Endothelial cell of umbilical vein (primary cell): ENCODE measurements at regions of chr13 and their contacts with region 1.

Region 1: DNA sequence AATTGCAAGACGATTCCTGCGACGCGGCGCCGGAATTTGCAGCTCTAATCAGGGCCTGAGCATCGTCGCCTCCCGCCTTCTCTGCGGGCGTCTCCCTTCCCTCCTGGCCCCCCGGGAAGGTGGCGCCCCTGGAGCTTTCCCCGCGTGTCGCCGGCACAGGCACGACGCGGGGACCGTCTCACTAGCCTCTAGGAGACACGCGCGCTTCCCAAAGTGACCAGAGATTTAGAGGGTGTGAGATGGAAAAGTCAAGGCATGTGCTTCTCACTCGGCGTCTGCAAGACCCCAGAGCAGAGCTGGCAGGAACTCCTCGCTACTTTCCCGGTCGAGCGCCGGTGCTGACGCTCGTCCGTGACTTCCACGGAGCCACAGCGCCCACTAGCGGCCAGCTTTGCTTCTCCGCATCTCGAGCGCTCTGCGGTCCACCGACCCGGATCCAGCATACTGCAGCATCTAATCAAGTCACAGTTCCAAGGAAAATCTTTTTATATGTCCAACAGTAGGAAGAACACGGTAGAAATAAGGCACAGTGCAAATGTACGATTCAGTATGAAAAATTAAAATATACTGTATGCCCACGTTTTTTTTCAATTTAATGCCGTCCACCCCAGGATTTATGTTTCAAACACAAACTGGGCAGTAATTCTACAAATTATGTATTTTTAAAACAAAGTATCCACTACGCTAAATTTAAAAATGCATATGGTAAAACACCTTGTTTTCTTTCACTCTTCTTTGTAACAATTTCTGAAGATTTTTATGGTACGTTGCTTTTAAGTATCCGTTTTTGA is 977 bp upstream of the EFNB2 start:
- DNase-seq: peak; percentile 94
- H3K4me3 ChIP-seq: peak overlapping the region; percentile 16 to 54 (median 53)
- H3K27ac ChIP-seq: peak overlapping the region; percentile 35
- H3K4me1 ChIP-seq: peaks cover 37% of the 10 kb centered on the region
- H3K27me3 ChIP-seq: no peaks in the 10 kb centered on the region
- CTCF ChIP-seq: peak; percentile 95 to 96
- POLR2A ChIP-seq: no peak

Region 2: DNA sequence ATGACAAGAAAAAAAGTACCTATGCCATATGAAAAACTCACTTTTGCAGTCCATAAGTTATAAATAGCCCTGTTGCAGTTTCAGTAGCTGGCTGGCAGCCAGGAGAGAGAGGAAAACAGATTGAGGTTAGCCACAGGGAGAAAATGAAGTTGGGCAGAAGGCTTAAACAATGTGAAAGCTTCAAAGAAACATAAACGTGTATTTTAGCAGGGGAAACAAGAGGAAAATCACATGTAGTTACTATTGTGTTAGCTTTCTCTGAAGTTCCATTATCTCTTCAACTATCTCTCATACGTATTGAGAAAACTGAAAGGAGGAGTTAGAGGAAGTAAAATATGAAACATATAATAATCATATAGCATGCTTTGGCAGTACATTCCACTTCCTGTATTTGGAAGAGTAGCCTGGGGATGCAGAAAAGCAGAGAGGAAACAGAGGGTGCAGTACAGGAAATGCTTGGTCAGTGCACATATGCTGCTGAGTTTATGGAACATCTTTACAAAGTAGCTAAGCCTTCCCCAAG is 1552.1 kb before region 1 on chr13:
- CTCF ChIA-PET with region 1: no interaction called
- POLR2A ChIA-PET with region 1: no interaction called
- dilution Hi-C with region 1: no loop called
- intact Hi-C with region 1: loop called (anchors 10 kb)
- DNase-seq: peak; percentile 92
- H3K4me3 ChIP-seq: peak overlapping the region in 1 of 3 experiments; percentile 25
- H3K27ac ChIP-seq: peak overlapping the region; percentile 78
- H3K4me1 ChIP-seq: peaks cover 26% of the 10 kb centered on the region
- H3K27me3 ChIP-seq: no peaks in the 10 kb centered on the region
- CTCF ChIP-seq: no peak
- POLR2A ChIP-seq: no peak

Region 3: GRCh38 chr13:105436943-105437342 is 1099.5 kb before region 1 on chr13:
- CTCF ChIA-PET with region 1: interaction called, 7 read pairs
- POLR2A ChIA-PET with region 1: no interaction called
- dilution Hi-C with region 1: no loop called
- intact Hi-C with region 1: loop called (anchors 1 kb)
- DNase-seq: peak; percentile 92
- H3K4me3 ChIP-seq: no peak overlapping the region
- H3K27ac ChIP-seq: peak overlapping the region; percentile 74
- H3K4me1 ChIP-seq: peaks cover 33% of the 10 kb centered on the region
- H3K27me3 ChIP-seq: no peaks in the 10 kb centered on the region
- CTCF ChIP-seq: no peak
- POLR2A ChIP-seq: no peak

Region 4: GRCh38 chr13:105847527-105848291 is 688.7 kb before region 1 on chr13:
- CTCF ChIA-PET with region 1: no interaction called
- POLR2A ChIA-PET with region 1: no interaction called
- dilution Hi-C with region 1: no loop called
- intact Hi-C with region 1: loop called (anchors 10 kb)
- DNase-seq: peak; percentile 73
- H3K4me3 ChIP-seq: no peak overlapping the region
- H3K27ac ChIP-seq: no peak overlapping the region
- H3K4me1 ChIP-seq: no peaks in the 10 kb centered on the region
- H3K27me3 ChIP-seq: no peaks in the 10 kb centered on the region
- CTCF ChIP-seq: no peak
- POLR2A ChIP-seq: no peak

Region 5: DNA sequence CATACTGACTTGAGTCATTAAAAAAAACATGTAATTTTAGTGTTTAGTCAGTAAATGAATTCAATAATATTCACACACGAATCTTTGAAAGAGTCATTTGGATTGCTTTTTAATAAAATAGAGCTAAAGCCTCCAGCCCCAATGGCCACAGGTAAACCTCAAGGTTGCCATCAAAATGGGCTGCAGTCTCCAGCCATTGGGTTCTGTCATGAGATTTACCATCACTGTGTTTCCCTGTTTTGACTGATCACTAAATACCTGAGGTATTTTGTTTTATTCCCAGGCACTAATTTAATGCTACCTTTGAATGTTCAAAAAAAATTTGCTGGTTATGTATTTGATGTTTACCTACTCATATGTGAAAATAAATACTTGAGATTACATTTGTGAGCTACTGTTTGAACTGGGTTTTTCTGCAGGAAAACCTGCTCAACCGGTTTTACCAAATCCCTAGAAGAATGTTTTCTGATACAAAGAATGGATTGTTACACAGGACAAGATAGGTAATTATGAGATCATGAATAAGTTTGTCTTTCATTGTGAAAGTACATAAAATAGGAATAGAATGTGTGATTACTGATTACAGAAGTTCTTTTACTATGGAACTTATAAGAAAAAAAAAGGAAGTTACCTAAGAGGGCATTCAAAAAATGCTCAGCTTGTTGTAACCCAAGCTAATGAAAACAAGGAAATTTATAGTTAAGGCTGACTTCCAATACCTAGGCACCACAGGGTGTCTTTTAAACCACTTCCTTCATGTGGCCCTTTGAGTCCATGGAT is 392.3 kb before region 1 on chr13:
- CTCF ChIA-PET with region 1: no interaction called
- POLR2A ChIA-PET with region 1: no interaction called
- dilution Hi-C with region 1: no loop called
- intact Hi-C with region 1: no loop called
- DNase-seq: no peak
- H3K4me3 ChIP-seq: no peak overlapping the region
- H3K27ac ChIP-seq: no peak overlapping the region
- H3K4me1 ChIP-seq: peaks cover 5% of the 10 kb centered on the region
- H3K27me3 ChIP-seq: no peaks in the 10 kb centered on the region
- CTCF ChIP-seq: no peak
- POLR2A ChIP-seq: no peak

Region 6: DNA sequence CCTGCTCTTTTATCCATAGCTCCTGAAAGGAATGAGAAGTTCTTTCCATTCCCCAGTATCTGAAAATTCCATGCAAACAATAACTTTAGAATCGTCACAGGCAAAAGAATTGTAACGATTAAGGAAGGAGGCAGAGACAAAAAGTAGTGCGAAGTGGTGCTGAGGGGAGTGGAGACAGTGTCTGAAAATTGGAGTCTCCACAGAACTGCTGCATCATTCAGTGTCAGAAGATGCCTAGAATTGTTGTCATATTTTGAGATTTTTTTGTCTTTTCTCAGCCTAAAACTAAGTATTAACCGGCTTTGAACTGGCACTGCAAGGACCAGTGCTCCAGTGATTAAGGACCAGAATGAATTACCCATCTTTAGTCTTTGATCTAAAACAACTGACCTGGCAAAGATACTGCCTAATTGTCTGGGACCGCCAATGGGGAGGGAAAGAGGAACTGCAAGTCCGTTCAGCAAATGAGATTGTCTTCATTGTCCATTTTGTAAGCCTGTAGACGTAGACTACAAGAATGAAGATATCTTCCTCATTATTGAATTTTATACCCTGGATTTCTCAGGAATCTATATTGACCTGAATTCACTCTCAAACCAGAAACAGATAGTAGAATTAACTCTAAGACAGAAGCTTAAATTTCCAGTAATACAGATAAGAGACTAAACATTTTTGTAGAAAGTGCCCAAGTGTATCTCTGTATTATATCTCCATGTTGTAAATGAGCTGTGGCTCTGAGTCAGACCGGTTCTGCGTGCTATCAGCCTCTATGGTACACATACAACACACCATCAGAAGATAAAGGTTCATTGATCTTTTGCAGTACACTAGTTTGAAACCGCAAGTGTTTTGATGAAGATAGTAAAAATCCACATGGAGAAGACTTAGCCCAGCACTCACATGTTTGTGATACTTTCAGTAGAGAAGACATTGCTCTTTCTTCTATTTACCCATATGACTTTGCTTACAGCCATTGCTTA is 294.2 kb before region 1 on chr13:
- CTCF ChIA-PET with region 1: no interaction called
- POLR2A ChIA-PET with region 1: no interaction called
- dilution Hi-C with region 1: no loop called
- intact Hi-C with region 1: no loop called
- DNase-seq: no peak
- H3K4me3 ChIP-seq: no peak overlapping the region
- H3K27ac ChIP-seq: no peak overlapping the region
- H3K4me1 ChIP-seq: no peaks in the 10 kb centered on the region
- H3K27me3 ChIP-seq: no peaks in the 10 kb centered on the region
- CTCF ChIP-seq: no peak
- POLR2A ChIP-seq: no peak

Region 7: DNA sequence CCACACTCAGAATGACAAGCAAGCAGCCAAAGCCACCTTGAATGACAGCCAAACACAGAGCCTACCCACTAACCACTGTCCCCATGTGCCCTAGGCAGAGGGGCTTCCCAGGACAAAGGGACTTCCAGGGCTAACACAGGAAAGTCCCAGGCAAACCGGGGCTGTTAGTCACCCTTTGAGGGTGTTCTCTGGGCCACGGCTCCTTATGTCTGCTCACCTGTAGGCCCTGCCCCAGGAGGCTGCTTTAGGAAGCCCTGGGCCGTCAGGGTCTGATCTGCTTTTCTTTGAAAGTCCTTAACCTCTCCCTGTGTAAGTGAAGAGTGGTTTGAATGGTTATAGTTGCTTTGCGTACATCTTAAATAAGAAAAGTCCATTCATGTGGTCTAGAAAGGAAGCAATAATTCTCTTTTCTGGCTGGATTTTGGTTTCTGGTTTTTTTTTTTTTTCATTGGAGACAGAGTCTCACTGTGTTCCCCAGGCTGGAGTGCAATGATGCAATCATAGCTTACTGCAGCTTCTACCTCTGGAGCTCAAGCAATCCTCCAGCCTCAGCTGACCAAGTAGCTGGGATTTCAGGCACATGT is 162.4 kb before region 1 on chr13:
- CTCF ChIA-PET with region 1: no interaction called
- POLR2A ChIA-PET with region 1: no interaction called
- dilution Hi-C with region 1: no loop called
- intact Hi-C with region 1: loop called (anchors 1 kb)
- DNase-seq: peak; percentile 48
- H3K4me3 ChIP-seq: no peak overlapping the region
- H3K27ac ChIP-seq: peak overlapping the region; percentile 66
- H3K4me1 ChIP-seq: peaks cover 40% of the 10 kb centered on the region
- H3K27me3 ChIP-seq: no peaks in the 10 kb centered on the region
- CTCF ChIP-seq: no peak
- POLR2A ChIP-seq: no peak

Region 8: GRCh38 chr13:106774621-106775020 is 238.2 kb after region 1 on chr13:
- CTCF ChIA-PET with region 1: no interaction called
- POLR2A ChIA-PET with region 1: no interaction called
- dilution Hi-C with region 1: no loop called
- intact Hi-C with region 1: no loop called
- DNase-seq: no peak
- H3K4me3 ChIP-seq: no peak overlapping the region
- H3K27ac ChIP-seq: no peak overlapping the region
- H3K4me1 ChIP-seq: no peaks in the 10 kb centered on the region
- H3K27me3 ChIP-seq: no peaks in the 10 kb centered on the region
- CTCF ChIP-seq: no peak
- POLR2A ChIP-seq: no peak

Region 9: DNA sequence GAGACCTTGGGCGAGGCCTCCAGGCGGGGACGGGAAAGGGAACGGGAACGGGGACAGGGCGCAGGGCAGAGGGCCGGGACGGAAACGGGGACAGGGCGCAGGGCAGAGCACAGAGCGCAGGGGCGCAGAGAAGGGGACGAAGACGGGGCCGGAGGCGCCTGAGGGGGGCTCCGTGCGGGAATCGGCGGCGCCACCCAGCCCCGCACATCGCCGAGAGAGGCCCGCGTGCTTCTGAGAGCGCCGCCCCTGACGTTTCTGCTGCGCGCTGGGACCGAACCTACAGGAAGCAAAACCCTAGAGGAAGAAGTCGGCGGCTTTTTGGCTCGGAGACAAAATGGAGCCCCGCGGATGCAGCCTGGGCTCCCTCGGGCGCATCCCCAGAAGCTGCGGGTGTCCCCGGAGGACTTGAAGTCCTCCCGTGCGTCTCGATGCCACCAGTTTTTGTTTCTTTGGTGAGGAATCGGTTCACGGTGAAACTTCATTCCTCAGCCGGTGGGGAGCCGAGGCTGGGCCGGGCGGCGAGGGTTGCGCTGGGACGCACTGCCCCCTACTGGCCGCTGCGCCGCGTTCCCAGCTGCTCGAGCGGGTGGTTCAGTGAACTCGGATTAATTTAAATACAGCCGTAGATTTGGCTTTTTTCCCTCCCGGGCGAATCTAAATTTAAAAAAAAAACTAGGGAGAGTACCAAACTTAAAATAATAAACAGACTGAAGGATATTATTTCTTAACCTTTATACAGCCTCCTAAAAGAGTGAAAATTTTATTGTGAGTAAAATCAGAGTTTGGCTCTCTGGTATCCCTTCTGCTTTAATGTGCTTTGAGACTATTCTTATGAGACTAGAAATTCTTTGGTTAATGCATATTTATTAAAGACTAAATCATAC is 381.5 kb after region 1 on chr13:
- CTCF ChIA-PET with region 1: interaction called, 14 read pairs
- POLR2A ChIA-PET with region 1: interaction called, 8 read pairs
- dilution Hi-C with region 1: no loop called
- intact Hi-C with region 1: loop called (anchors 1 kb)
- DNase-seq: peak; percentile 91
- H3K4me3 ChIP-seq: peak overlapping the region; percentile 44 to 74 (median 51)
- H3K27ac ChIP-seq: peak overlapping the region; percentile 90
- H3K4me1 ChIP-seq: peaks cover 27% of the 10 kb centered on the region
- H3K27me3 ChIP-seq: peaks cover 7 to 13% of the 10 kb centered on the region in 2 experiments
- CTCF ChIP-seq: peak; percentile 92 to 97
- POLR2A ChIP-seq: peak; percentile 55